ENCODE measurements at regions of chr20 and their contacts with region 1.

Region 1: GRCh38 chr20:18466894-18467730 is at the starts of genes DZANK1 and POLR3F:
- DNase-seq: peak; percentile 96
- H3K4me3 ChIP-seq: peak within 1 kb of the TSS; percentile 66 to 86 (median 82)
- H3K27ac ChIP-seq: peak within 1 kb of the TSS; percentile 80 to 86 (median 82)
- H3K4me1 ChIP-seq: peaks cover 0 to 21% (median 15%) of the 10 kb centered on the region in 4 donors
- H3K27me3 ChIP-seq: no peaks in the 10 kb centered on the region
- CTCF ChIP-seq: no peak
- EP300 ChIP-seq: no peak
- POLR2A ChIP-seq: peak in 1 of 2 donors; percentile 18
- total RNA-seq, gene DZANK1: 1.2 to 2.9 (median 2.2) TPM
- total RNA-seq, gene POLR3F: 9.7 to 11.8 (median 10.8) TPM

Region 2: DNA sequence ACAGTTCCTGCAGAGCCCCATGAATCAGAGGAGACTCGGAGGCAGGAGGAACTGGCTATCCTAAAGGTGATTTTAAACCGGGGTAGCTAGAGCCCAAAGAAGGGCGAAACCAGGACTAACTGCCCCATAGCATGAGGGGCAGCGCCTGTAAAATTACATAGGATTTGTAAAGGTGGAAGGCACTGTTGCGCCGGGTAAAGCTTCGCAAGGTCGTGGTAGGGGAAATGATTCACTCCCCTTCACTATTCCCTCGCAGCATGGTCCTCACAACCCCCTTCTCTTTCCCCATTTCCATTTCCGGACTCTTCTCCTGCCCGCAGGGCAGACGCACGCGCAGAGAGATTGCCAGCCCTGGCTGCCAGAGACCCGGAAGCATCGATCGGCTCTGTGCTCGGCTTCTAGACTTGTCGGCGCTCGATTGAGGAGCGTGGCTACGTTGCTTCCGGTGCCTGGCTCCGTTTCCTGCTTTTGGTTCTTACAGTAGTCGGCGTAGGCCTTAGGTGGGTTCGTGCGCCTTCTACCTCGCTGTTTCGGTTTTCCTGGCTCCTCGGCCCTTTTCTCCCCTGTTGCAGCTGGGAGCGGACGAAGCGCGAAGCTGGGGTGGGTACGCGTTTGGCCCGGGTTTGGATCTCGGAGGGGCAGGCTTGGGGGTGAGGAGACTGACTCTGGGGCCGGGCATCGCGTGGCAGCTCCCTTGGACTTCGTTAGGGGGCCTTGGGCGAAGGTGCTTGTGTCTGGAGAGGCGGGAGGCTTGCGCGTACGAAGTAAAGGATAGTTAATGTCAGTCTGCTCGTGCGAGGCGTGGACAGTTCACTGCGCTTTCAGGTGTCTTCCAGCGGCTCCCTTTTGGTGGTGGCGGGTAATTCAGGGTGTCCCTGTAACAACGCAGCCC is 1737.3 kb before region 1 on chr20 and contains the start of gene SNRPB2:
- intact Hi-C with region 1: loop called (anchors 5 kb)
- DNase-seq: peak; percentile 96
- H3K4me3 ChIP-seq: peak within 1 kb of the TSS; percentile 86 to 96 (median 92)
- H3K27ac ChIP-seq: peak within 1 kb of the TSS; percentile 74 to 88 (median 83)
- H3K4me1 ChIP-seq: peaks cover 0 to 25% (median 19%) of the 10 kb centered on the region in 4 donors
- H3K27me3 ChIP-seq: peaks cover 0 to 13% (median 0%) of the 10 kb centered on the region in 3 donors
- CTCF ChIP-seq: no peak
- EP300 ChIP-seq: peak in 1 of 4 donors; percentile 7
- POLR2A ChIP-seq: peak; percentile 12 to 43
- total RNA-seq, gene SNRPB2: 18.6 to 35.7 (median 30.5) TPM

Region 3: DNA sequence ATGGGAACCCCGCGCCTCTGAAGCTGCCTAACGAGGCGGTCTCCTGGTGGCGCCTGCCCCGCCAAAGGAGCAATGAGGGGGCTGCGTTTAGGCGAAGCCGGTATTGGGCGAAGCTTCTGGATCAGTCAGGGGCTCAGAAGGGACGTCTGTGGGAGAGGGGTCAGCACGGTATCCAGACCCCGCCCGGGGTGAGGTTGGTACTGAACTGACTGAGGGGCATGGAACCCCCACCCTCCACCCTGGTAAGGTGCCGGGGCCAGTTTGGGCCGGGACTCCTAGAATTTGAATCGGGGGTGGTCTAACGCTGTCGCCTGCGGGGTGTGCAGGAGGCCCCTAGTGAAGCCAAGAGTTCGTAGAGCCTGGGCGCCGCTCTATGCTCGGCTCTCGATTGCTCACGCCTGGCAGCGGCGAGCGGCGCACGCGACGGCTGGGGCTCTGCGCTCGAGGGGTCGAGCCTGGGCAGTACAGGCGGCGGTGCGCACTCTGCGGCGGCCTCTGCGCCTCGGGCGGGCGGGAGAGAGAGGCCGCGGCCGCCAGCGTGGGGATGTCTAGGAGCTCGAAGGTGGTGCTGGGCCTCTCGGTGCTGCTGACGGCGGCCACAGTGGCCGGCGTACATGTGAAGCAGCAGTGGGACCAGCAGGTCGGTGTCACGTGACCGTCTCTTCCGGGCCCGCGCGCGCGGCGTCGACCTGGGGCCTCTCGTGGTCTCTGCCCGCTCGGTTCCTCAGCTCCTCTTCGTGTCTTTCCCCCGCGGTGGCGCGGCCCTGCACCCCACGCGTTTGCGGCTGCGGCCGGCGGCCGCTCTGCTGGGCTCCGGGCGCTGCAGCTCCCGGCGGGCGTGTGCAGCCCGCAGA is 329.5 kb before region 1 on chr20 and contains the starts of genes KAT14 and PET117:
- intact Hi-C with region 1: loop called (anchors 10 kb)
- DNase-seq: peak; percentile 93
- H3K4me3 ChIP-seq: peak within 1 kb of the TSS; percentile 62 to 83 (median 78)
- H3K27ac ChIP-seq: peak within 1 kb of the TSS; percentile 91 to 93 (median 92)
- H3K4me1 ChIP-seq: peaks cover 0 to 37% (median 30%) of the 10 kb centered on the region in 4 donors
- H3K27me3 ChIP-seq: no peaks in the 10 kb centered on the region
- CTCF ChIP-seq: no peak
- EP300 ChIP-seq: no peak
- POLR2A ChIP-seq: peak; percentile 38 to 47
- total RNA-seq, gene KAT14: 12.6 to 21.7 (median 17.9) TPM
- total RNA-seq, gene PET117: 7.8 to 18.8 (median 16.9) TPM

Region 4: GRCh38 chr20:18287915-18288748 is 179.0 kb before region 1 on chr20 and contains the start of gene ZNF133:
- intact Hi-C with region 1: loop called (anchors 5 kb)
- DNase-seq: peak; percentile 97
- H3K4me3 ChIP-seq: peak within 1 kb of the TSS; percentile 78 to 90 (median 84)
- H3K27ac ChIP-seq: peak within 1 kb of the TSS; percentile 89 to 94 (median 90)
- H3K4me1 ChIP-seq: peaks cover 0 to 18% (median 9%) of the 10 kb centered on the region in 4 donors
- H3K27me3 ChIP-seq: no peaks in the 10 kb centered on the region
- CTCF ChIP-seq: no peak
- EP300 ChIP-seq: no peak
- POLR2A ChIP-seq: peak; percentile 57 to 74
- total RNA-seq, gene ZNF133: 16.2 to 20.3 (median 18.4) TPM

Region 5: DNA sequence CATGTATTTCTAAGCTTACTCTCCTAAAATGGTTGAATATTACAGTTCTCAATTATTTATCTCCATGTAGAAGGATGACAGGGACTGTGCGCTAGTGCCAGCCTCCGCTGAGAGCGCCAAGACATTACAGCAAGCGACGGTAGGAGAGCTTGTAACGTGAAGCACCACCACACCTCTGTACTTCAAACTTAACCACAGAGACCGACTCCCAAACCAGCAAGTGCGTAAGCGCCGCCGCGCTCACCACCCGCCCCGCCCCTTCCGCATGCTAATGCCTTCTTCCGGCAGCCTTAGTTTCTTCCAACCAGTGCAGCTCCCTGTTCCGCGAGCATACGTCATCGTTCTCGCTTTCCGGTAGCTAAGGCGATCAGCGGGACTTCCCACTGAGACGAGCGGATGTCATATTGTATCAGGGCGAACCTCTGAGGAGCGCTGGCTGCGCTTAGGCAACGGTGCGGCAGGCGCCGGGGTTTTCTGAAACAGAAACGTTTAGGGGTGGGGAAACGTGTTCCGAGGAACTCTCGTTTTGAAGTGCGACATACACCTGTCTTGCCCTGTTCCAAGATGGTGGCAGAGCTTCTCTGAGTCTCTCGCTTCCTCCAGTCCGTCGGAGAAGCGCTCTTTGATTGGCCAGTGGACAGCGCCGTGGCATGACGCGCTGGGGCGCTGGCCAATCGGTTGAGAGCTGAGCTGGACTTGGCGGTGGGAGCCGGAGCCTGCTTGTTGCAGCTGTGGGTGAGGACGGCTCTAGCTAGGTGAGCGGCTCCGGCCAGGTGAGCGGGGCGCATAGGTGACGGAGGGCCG is 40.3 kb after region 1 on chr20 and contains the start of gene SEC23B:
- intact Hi-C with region 1: loop called (anchors 5 kb)
- DNase-seq: peak; percentile 99
- H3K4me3 ChIP-seq: peak within 1 kb of the TSS; percentile 54 to 88 (median 76)
- H3K27ac ChIP-seq: peak within 1 kb of the TSS; percentile 90 to 95 (median 92)
- H3K4me1 ChIP-seq: peaks cover 0 to 18% (median 16%) of the 10 kb centered on the region in 4 donors
- H3K27me3 ChIP-seq: peaks cover 0 to 17% (median 0%) of the 10 kb centered on the region in 3 donors
- CTCF ChIP-seq: no peak
- EP300 ChIP-seq: peak in 1 of 4 donors; percentile 37
- POLR2A ChIP-seq: peak; percentile 86 to 89
- total RNA-seq, gene SEC23B: 10.5 to 14.2 (median 13.5) TPM

Region 6: DNA sequence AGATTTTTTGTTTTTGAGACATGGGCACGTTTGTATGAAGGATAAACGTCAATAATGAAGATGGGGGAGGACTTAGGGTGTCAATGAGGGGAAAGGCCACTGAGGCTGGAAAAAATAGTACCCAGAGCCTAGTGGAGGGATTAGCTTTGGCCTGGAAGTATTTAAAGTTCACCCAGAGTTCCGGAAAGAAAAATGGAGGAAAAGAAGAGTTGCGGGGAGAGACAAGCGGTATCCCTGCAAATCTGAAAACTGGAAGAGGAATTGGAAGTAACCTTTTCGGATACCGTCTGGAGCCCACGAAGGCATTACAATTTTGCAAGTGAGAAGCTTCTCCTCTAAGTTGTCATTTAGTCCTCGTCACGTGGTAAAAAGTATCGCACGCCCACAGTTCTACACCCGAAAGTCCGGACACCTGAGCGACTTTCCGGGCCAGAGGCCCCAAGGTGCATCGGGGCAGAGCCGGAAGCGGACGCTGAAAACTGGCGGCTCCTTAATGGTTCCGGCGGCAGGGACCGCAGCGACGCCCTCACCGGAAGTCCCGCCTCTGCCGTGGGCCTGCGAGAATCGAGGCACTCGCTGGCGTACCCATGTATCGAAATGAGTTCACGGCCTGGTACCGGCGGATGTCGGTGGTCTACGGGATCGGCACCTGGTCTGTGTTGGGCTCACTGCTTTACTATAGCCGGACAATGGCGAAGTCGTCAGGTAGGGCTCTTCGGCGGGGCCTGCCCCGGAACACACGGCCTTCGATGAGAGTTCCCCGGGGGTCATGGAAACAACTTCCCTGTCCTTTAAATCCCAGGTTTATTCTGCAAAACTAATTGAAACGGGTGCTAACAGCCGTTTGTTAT is 100.0 kb after region 1 on chr20 and contains the start of gene SMIM26:
- intact Hi-C with region 1: loop called (anchors 5 kb)
- DNase-seq: peak; percentile 97
- H3K4me3 ChIP-seq: peak within 1 kb of the TSS; percentile 56 to 68 (median 66)
- H3K27ac ChIP-seq: peak within 1 kb of the TSS; percentile 85 to 88 (median 87)
- H3K4me1 ChIP-seq: peaks cover 0 to 14% (median 12%) of the 10 kb centered on the region in 4 donors
- H3K27me3 ChIP-seq: no peaks in the 10 kb centered on the region
- CTCF ChIP-seq: no peak
- EP300 ChIP-seq: no peak
- POLR2A ChIP-seq: peak; percentile 40 to 53
- total RNA-seq, gene SMIM26: 140 to 235 (median 204) TPM

Region 7: GRCh38 chr20:18793625-18794427 is 326.7 kb after region 1 on chr20:
- intact Hi-C with region 1: loop called (anchors 10 kb)
- DNase-seq: peak; percentile 94
- H3K4me3 ChIP-seq: peak overlapping the region; percentile 60 to 79 (median 66)
- H3K27ac ChIP-seq: peak overlapping the region; percentile 86 to 89 (median 88)
- H3K4me1 ChIP-seq: peaks cover 0 to 15% (median 9%) of the 10 kb centered on the region in 4 donors
- H3K27me3 ChIP-seq: no peaks in the 10 kb centered on the region
- CTCF ChIP-seq: no peak
- EP300 ChIP-seq: peak in 1 of 4 donors; percentile 14
- POLR2A ChIP-seq: peak; percentile 58 to 65

Measured in sigmoid colon (tissue), 7 donors.